OCI-LY7 (cell line): ENCODE measurements at regions of chr3 and their contacts with region 1.

Region 1: GRCh38 chr3:182618085-182618732 is 175.1 kb upstream of the ATP11B start:
- DNase-seq: peak; percentile 77
- H3K4me3 ChIP-seq: no peak overlapping the region
- H3K27ac ChIP-seq: no peak overlapping the region
- H3K4me1 ChIP-seq: peaks cover 25% of the 10 kb centered on the region
- CTCF ChIP-seq: peak; percentile 96

Region 2: DNA sequence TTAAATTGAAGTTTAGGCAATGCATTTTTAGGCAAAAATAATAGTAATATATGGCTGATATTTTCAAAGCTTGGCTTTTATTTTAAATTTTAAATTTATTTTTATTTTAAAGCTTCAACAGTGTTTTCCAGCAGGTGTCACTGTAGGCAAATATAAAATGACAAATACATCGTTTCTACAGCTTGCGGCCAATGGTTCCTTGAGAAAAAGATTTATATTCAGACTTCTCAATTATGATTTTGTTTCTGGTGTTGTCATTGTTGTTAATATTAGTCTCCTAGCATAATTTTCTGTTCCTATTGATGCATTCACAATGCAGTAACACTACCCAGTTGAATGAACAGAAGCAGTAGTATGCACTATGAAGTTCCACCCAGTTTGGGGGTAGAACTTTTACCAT is 1407.9 kb before region 1 on chr3:
- CTCF ChIA-PET with region 1: no interaction called
- POLR2A ChIA-PET with region 1: no interaction called
- intact Hi-C with region 1: loop called (anchors 10 kb)
- DNase-seq: peak; percentile 31
- H3K4me3 ChIP-seq: no peak overlapping the region
- H3K27ac ChIP-seq: no peak overlapping the region
- H3K4me1 ChIP-seq: no peaks in the 10 kb centered on the region
- CTCF ChIP-seq: peak; percentile 76

Region 3: DNA sequence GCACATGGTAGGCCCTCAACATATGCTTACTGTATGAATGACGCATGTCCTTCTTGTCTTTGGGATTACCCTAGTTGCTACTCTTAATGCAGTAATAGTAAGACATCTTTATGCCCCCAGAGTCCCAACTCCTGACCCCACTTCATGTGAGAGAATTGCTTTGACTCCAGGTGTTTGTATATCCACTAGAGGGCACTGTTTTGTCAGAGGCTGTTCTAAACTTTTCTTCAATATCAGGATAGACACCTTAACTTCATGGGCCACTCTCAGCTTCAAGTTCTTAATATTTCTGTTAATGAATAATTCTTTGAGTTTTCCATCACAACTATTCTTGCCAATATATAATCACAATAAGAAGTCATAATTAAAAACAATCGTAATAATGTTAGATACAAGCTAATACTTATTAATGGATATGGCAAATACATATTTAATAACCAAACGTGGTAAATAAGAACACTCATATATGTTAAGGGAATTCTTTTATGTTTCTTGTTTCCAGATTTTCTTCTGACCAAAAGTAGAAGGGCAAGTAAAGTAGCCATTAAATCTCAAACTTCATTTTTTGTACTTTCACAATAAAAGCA is 1291.5 kb before region 1 on chr3:
- CTCF ChIA-PET with region 1: no interaction called
- POLR2A ChIA-PET with region 1: no interaction called
- intact Hi-C with region 1: loop called (anchors 5 kb)
- DNase-seq: peak; percentile 57
- H3K4me3 ChIP-seq: no peak overlapping the region
- H3K27ac ChIP-seq: no peak overlapping the region
- H3K4me1 ChIP-seq: no peaks in the 10 kb centered on the region
- CTCF ChIP-seq: peak; percentile 94

Region 4: GRCh38 chr3:182248351-182248880 is 369.8 kb before region 1 on chr3:
- CTCF ChIA-PET with region 1: no interaction called
- POLR2A ChIA-PET with region 1: no interaction called
- intact Hi-C with region 1: loop called (anchors 5 kb)
- DNase-seq: peak; percentile 35
- H3K4me3 ChIP-seq: no peak overlapping the region
- H3K27ac ChIP-seq: no peak overlapping the region
- H3K4me1 ChIP-seq: peaks cover 3% of the 10 kb centered on the region
- CTCF ChIP-seq: peak; percentile 69

Region 5: GRCh38 chr3:182325213-182325941 is 292.8 kb before region 1 on chr3:
- CTCF ChIA-PET with region 1: no interaction called
- POLR2A ChIA-PET with region 1: interaction called, 4 read pairs
- intact Hi-C with region 1: loop called (anchors 5 kb)
- DNase-seq: peak; percentile 92
- H3K4me3 ChIP-seq: peak overlapping the region; percentile 40
- H3K27ac ChIP-seq: peak overlapping the region; percentile 84
- H3K4me1 ChIP-seq: peaks cover 69% of the 10 kb centered on the region
- CTCF ChIP-seq: no peak

Region 6: GRCh38 chr3:182412065-182412464 is 206.1 kb before region 1 on chr3:
- CTCF ChIA-PET with region 1: no interaction called
- POLR2A ChIA-PET with region 1: no interaction called
- intact Hi-C with region 1: no loop called
- DNase-seq: peak; percentile 55
- H3K4me3 ChIP-seq: peak overlapping the region; percentile 68
- H3K27ac ChIP-seq: peak overlapping the region; percentile 96
- H3K4me1 ChIP-seq: peaks cover 95% of the 10 kb centered on the region
- CTCF ChIP-seq: no peak

Region 7: DNA sequence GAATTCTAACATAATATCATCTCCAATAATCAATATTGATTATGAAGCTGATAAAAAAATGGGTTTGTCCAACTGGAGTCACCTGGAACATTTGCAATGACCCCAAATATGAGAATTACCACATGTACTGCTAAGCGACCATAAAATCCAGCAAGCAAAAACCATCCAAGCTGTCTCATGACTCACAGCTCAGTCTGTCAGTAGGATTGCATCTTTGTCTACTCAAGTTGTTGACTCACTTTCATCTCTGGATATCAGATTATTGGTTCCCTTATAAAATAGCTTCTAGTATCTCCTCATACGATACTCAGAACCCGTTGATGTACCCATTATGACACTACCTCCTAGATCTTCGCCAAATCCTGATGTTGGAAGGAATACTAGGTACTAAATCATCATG is 34.7 kb before region 1 on chr3:
- CTCF ChIA-PET with region 1: no interaction called
- POLR2A ChIA-PET with region 1: no interaction called
- intact Hi-C with region 1: no loop called
- DNase-seq: no peak
- H3K4me3 ChIP-seq: no peak overlapping the region
- H3K27ac ChIP-seq: no peak overlapping the region
- H3K4me1 ChIP-seq: no peaks in the 10 kb centered on the region
- CTCF ChIP-seq: no peak

Region 8: GRCh38 chr3:182683453-182683852 is 65.2 kb after region 1 on chr3:
- CTCF ChIA-PET with region 1: interaction called, 4 read pairs
- POLR2A ChIA-PET with region 1: interaction called, 3 read pairs
- intact Hi-C with region 1: loop called (anchors 1 kb)
- DNase-seq: peak; percentile 77
- H3K4me3 ChIP-seq: no peak overlapping the region
- H3K27ac ChIP-seq: peak overlapping the region; percentile 54
- H3K4me1 ChIP-seq: peaks cover 12% of the 10 kb centered on the region
- CTCF ChIP-seq: peak; percentile 99

Region 9: GRCh38 chr3:183252973-183253901 is 635.0 kb after region 1 on chr3 and contains the start of gene B3GNT5:
- CTCF ChIA-PET with region 1: no interaction called
- POLR2A ChIA-PET with region 1: no interaction called
- intact Hi-C with region 1: no loop called
- DNase-seq: no peak
- H3K4me3 ChIP-seq: no peak within 1 kb of the TSS
- H3K27ac ChIP-seq: no peak within 1 kb of the TSS
- H3K4me1 ChIP-seq: no peaks in the 10 kb centered on the region
- CTCF ChIP-seq: no peak
- total RNA-seq, gene B3GNT5: not detected in 2 replicates